ENCODE measurements at regions of chr6 and their contacts with region 1.

Region 1: DNA sequence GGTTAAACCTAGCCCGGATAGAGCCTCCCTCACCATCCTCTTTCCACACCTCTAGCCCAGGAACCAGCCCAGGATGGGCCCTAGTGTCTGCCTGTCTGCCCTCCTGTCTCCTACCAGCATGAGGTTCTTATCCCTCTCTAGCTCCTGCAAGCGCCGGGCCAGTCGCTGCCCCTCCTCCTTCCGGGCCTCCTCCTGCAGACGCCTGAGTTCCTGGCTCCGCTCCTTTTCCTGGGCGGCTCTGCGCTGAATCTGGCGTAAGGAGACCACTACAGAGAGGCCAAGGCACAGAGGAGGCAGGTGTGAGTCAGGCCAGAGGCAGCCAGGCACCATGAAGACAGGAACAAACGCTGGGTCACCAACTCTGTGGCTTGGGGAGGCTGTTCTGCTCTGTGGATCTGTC is 4.3 kb upstream of the PSORS1C2 start:
- DNase-seq: no peak
- H3K4me3 ChIP-seq: no peak overlapping the region
- H3K27me3 ChIP-seq: no peaks in the 10 kb centered on the region
- CTCF ChIP-seq: no peak

Region 2: DNA sequence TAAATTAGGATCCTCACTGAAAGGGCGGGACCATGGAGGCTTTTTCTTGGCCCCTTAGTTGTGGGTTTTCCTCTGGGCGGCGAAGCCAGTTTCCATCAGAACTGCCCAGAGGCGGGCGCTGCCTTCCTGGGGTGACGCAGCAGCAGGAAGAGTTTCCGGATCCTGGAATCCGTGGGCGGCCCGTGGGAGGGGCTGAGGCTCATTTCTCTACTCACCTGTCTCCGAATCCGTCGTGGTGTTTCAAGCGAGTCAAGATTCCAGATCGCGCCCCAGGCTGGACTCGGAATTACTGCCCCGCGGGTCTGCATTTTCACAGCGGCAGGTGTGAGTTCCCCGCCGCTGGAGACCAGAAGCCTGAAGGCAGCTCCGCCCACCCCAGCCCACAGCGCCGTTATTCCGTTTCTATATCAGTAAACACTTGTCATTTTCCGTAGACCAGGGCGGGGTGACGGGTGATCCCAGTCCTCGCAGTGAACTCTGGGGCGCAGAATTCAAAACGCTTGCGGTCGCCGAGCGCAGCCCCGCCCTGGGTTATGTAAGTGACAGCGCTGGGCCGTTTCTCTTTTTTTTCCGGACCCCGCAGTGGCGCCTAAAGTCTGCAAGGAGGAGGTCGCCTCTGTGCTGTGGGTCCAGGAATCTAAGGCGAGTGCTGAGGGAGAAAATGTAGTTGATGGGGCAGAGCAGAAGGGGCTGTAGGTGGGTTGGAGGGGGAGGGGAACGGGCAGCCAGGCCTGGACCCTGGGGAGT is 54.6 kb after region 1 on chr6:
- CTCF ChIA-PET with region 1: interaction called, 166 read pairs
- POLR2A ChIA-PET with region 1: no interaction called
- DNase-seq: peak; percentile 30
- H3K4me3 ChIP-seq: peak overlapping the region; percentile 57
- H3K27me3 ChIP-seq: no peaks in the 10 kb centered on the region
- CTCF ChIP-seq: no peak

Region 3: DNA sequence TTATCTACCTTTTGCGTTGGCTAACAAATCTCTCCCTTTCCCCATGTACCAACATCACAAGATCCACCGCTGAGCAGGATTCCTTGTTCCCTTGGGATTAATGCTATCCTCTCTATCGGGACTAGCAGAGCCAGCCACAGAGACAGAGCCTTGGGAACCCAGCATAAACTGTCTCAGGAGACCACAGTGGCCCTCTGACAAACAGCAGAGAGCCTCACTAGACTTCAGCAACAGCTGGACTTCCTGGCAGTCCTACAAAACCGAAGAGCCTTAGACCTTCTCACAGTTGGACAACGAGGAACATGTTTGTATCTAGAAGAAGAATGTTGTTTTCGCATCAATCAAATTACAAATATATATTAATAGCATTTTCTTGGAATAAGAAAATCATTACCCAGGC is 67.0 kb after region 1 on chr6:
- CTCF ChIA-PET with region 1: no interaction called
- POLR2A ChIA-PET with region 1: no interaction called
- DNase-seq: no peak
- H3K4me3 ChIP-seq: no peak overlapping the region
- H3K27me3 ChIP-seq: no peaks in the 10 kb centered on the region
- CTCF ChIP-seq: no peak

Region 4: DNA sequence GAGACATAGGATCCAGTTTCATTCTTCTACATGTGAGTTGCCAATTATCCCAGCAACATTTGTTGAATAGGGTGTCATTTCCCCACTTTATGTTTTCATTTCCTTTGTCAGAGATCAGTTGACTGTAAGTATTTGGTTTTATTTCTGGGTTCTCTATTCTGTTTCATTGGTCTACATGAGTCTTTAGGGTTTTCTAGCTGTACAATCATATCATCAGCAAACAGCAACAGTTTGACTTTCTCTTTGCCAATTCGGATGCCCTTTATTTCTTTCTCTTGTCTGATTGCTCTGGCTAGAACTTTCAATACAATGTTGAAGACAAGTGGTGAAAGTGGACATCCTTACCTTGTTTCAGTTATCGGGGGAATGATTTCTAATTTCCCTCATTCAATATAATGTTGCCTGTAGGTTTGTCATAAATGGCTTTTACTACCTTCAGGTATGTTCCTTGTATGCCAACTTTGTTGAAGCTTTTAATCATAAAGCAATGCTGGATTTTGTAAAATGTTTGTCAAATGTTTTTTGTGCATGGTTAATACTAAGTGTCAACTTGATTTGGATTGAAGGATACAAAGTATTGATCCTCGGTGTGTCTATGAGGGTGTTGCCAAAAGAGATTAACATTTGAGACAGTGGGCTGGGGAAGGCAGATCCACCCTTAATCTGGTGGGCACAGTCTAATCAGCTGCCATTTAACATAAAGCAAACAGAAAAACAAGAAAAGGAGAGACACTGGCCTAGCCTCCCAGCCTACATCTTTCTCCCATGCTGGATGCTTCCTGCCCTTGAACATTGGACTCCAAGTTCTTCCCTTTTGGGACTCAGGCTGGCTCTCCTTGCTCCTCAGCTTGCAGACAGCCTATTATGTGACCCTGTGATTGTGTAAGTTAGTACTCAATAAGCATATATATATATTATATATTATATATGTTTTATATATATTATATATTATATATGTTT is 283.5 kb after region 1 on chr6:
- CTCF ChIA-PET with region 1: no interaction called
- POLR2A ChIA-PET with region 1: no interaction called
- DNase-seq: no peak
- H3K4me3 ChIP-seq: no peak overlapping the region
- H3K27me3 ChIP-seq: no peaks in the 10 kb centered on the region
- CTCF ChIP-seq: no peak

Measured in BJ (cell line).